Activated T-helper 1 cell treated with anti-CD3 and anti-CD28 coated beads, Interleukin-12 subunit alpha, Interleukin-12 subunit beta, Interleukin-2, Interleukin-4 antibody, amounts not matched to agents 30 ng/mL and 10 ng/mL and 1 ng/mL, durations not matched to agents 14 hours and 24 hours and 36 hours (primary cell): ENCODE measurements at regions of chr12 and their contacts with region 1.

Region 1: DNA sequence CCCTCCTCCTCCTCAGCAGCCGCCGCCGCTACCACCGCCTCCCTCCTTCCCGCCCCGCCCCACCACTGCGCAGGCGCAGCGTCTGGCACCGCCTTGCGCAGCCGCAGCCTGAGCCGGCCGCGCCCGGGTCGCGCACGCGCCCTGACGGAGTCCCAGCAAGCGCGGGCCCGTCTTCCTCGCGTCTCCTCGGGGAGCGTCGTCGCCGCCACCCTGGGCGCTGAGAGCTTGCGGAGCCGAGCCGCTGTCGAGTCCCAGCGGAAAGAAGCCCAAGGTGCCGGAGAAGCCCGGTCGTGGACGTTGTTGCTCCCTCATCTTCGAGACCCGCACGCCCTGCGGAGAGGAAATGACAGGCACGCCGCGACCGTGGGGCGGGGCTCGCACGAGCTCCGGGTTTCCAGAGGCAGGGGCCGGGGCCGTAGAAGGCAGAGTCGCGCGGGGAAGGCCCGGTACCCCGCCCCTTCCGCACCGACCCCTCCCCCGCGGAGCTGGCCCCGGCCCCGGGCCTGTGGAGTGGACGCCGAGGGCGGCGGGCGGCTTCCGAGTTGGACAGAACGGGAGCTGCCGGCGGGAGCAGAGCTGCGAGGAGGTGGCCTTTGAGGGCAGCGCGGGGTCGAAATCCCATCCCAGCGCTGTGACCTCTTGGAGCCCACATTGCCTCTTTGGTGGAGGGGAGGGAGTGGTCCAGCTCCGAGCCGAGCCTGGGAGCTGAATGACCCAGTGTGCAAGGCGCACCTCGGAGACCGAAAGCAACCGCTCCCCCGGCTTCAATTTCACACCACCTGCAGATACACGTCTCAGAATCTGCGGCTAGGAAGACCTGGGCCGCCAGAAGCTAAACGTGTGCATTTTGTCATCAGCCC is 469 bp upstream of the RAB35 start:
- DNase-seq: peak; percentile 97
- H3K4me3 Mint-ChIP-seq: peak overlapping the region; percentile 92
- H3K27ac Mint-ChIP-seq: peak overlapping the region; percentile 94
- H3K4me1 Mint-ChIP-seq: peaks cover 72% of the 10 kb centered on the region
- H3K27me3 Mint-ChIP-seq: no peaks in the 10 kb centered on the region

Region 2: GRCh38 chr12:119225454-119225853 is 891.6 kb before region 1 on chr12:
- intact Hi-C with region 1: no loop called
- DNase-seq: no peak
- H3K4me3 Mint-ChIP-seq: no peak overlapping the region
- H3K27ac Mint-ChIP-seq: no peak overlapping the region
- H3K4me1 Mint-ChIP-seq: no peaks in the 10 kb centered on the region
- H3K27me3 Mint-ChIP-seq: no peaks in the 10 kb centered on the region

Region 3: DNA sequence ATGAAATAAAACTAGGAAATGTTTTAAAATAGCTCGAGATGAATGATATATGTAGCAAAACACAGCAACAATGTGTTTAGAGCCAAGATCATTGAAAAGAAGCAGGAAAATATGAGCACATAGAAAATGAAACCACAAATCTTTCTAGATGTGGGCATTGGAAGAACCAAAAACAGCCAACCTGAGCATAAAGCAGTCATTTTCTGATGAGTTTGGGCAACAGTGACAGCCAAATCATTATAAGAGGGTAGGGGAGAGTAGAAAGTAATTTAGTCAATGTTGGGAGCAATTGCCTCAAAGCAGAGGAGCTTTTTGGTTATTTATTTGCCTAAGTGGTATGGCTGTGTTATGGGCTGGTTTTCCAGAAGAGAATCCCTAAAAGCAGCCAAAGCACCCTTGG is 136.8 kb before region 1 on chr12:
- intact Hi-C with region 1: loop called (anchors 2 kb)
- DNase-seq: peak; percentile 9
- H3K4me3 Mint-ChIP-seq: peak overlapping the region; percentile 53
- H3K27ac Mint-ChIP-seq: peak overlapping the region; percentile 90
- H3K4me1 Mint-ChIP-seq: peaks cover 11% of the 10 kb centered on the region
- H3K27me3 Mint-ChIP-seq: peaks cover 13% of the 10 kb centered on the region

Region 4: DNA sequence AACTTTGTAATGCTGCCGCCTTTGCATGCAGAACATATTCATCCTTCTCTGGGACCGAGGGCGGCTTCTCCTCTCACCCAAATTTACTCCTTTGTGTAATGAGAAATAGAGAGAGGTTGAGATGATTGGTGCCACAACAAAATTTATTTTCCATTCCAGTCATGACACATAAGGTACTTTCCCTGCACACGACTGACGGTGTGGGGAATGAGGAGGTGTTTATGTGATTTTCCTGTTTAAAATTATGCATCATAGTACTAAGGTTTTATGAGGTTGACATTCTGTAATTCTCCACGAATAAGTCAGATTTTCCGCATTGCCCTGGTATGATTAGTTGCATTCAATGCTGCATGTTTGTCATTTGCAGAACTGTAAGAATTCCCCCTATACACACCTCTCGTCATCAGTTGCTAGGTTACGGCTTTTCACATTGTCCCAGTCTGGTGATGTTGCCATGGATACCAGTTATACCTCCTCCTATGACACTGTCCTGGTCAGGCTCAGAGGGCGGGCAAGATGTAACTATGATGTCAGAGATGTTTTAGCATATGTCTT is 104.9 kb before region 1 on chr12:
- intact Hi-C with region 1: loop called (anchors 1 kb)
- DNase-seq: peak; percentile 84
- H3K4me3 Mint-ChIP-seq: peak overlapping the region; percentile 72
- H3K27ac Mint-ChIP-seq: peak overlapping the region; percentile 95
- H3K4me1 Mint-ChIP-seq: peaks cover 88% of the 10 kb centered on the region
- H3K27me3 Mint-ChIP-seq: no peaks in the 10 kb centered on the region

Region 5: GRCh38 chr12:120055231-120056021 is 61.6 kb before region 1 on chr12:
- intact Hi-C with region 1: no loop called
- DNase-seq: no peak
- H3K4me3 Mint-ChIP-seq: no peak overlapping the region
- H3K27ac Mint-ChIP-seq: no peak overlapping the region
- H3K4me1 Mint-ChIP-seq: peaks cover 24% of the 10 kb centered on the region
- H3K27me3 Mint-ChIP-seq: no peaks in the 10 kb centered on the region

Region 6: DNA sequence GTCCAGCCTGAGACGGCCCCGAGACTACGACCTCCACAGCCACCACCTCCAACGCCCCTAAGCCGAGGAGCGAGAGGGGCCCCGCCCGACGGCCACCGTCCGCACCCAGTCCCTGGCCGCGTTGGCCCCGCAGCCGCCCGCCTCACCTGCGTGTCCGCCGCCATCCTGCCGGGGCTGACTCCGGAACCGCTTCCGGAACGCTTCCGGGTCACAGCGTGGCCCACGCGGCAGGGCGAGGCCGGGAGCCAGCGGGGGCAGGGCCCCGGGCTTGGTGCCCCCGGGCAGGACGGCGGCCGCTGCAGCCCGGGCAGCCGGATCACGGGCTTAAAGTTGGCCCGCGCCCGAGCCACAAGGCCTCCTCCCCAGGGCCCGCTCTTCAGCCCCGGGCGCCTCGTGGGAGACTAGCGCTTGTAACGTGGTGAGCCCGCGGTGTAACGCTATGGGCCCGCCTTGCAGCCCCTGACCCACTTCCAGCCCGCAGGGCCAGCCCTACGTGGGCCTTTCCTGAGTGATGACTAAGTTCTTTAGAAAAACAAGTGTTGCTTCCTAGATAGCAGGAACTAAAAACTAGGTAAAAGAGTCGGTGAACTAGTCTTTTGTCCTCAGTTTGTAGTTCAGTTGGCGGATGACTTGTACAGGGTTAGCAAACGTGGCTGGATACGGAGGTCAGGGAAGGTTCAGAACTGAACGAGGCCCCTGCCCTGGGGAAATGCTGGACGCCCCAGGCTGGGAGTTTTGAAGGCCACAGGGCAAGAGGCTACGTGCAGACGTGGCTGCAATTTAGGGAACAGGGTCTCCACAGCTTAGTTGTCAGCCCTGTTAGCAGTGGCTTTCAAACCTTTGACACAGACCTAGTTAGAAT is 77.7 kb after region 1 on chr12 and contains the start of gene GCN1:
- intact Hi-C with region 1: loop called (anchors 5 kb)
- DNase-seq: peak; percentile 86
- H3K4me3 Mint-ChIP-seq: peak within 1 kb of the TSS; percentile 91
- H3K27ac Mint-ChIP-seq: peak within 1 kb of the TSS; percentile 96
- H3K4me1 Mint-ChIP-seq: peaks cover 60% of the 10 kb centered on the region
- H3K27me3 Mint-ChIP-seq: no peaks in the 10 kb centered on the region
- total RNA-seq, gene GCN1: 164 and 173 TPM in 2 replicates

Region 7: DNA sequence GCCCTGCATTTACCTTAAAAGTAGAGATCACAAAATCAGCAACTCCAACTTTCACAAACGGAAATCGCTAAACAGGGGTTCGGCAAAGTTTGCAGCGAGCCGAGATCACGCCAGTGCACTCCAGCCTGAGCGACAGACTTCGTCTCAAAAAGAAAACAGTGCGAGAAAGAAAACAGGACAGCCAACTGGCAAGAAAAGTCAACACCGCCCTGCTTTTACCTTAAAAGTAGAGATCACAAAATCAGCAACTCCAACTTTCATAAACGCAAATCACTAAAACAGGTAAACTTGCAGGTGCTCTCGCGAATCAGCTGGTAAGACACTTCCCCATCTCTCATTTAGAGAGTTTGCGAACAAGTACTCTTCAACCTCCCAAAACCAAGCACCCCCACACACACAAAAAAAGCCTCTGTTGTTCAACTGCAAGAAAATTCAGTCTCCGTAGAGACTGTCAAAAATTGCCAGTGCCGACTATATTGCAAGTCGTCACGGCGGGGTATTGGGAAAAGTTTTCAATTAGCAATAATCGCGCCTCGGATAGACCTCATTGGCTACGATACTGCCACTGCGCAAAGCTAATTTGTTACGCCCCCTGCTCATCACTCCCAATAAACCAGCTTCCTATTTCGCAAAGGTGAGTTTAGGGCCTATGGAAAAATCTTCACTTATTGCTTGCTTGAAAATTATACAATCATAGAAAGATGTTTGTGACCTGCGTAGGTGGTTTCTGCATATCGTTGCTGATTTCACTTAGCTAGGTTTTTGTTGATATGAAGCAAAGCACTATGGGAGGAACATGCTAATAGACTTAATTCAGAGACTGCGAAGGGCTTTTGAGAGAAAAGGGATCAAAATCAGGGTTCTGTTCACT is 175.9 kb after region 1 on chr12 and contains the start of gene RNU4-1:
- intact Hi-C with region 1: loop called (anchors 2 kb)
- DNase-seq: peak; percentile 74
- H3K4me3 Mint-ChIP-seq: no peak within 1 kb of the TSS
- H3K27ac Mint-ChIP-seq: no peak within 1 kb of the TSS
- H3K4me1 Mint-ChIP-seq: no peaks in the 10 kb centered on the region
- H3K27me3 Mint-ChIP-seq: peaks cover 12% of the 10 kb centered on the region
- total RNA-seq, gene RNU4-1: 2,369 and 3,474 TPM in 2 replicates